Esophagus muscularis mucosa (tissue), 4 donors: ENCODE measurements at regions of chr20 and their contacts with region 1.

Region 1: GRCh38 chr20:41078329-41078728 is 49.7 kb downstream of the TOP1 start:
- DNase-seq: no peak
- H3K4me3 ChIP-seq: no peak overlapping the region
- H3K27ac ChIP-seq: peak overlapping the region in 1 of 4 donors; percentile 13
- H3K4me1 ChIP-seq: peaks cover 16 to 74% (median 46%) of the 10 kb centered on the region in 4 donors
- H3K27me3 ChIP-seq: no peaks in the 10 kb centered on the region
- CTCF ChIP-seq: peak; percentile 44 to 58 (median 51)
- EP300 ChIP-seq: no peak
- POLR2A ChIP-seq: no peak

Region 2: GRCh38 chr20:40962730-40963504 is 115.4 kb before region 1 on chr20:
- intact Hi-C with region 1: no loop called
- DNase-seq: peak; percentile 93
- H3K4me3 ChIP-seq: no peak overlapping the region
- H3K27ac ChIP-seq: no peak overlapping the region
- H3K4me1 ChIP-seq: peaks cover 0 to 5% (median 2%) of the 10 kb centered on the region in 4 donors
- H3K27me3 ChIP-seq: no peaks in the 10 kb centered on the region
- CTCF ChIP-seq: peak; percentile 82 to 91 (median 91)
- EP300 ChIP-seq: no peak
- POLR2A ChIP-seq: no peak

Region 3: GRCh38 chr20:40990542-40991120 is 87.7 kb before region 1 on chr20:
- intact Hi-C with region 1: loop called (anchors 5 kb)
- DNase-seq: peak; percentile 93
- H3K4me3 ChIP-seq: no peak overlapping the region
- H3K27ac ChIP-seq: no peak overlapping the region
- H3K4me1 ChIP-seq: peaks cover 4 to 11% (median 7%) of the 10 kb centered on the region in 4 donors
- H3K27me3 ChIP-seq: no peaks in the 10 kb centered on the region
- CTCF ChIP-seq: peak; percentile 75 to 86 (median 85)
- EP300 ChIP-seq: no peak
- POLR2A ChIP-seq: no peak

Region 4: DNA sequence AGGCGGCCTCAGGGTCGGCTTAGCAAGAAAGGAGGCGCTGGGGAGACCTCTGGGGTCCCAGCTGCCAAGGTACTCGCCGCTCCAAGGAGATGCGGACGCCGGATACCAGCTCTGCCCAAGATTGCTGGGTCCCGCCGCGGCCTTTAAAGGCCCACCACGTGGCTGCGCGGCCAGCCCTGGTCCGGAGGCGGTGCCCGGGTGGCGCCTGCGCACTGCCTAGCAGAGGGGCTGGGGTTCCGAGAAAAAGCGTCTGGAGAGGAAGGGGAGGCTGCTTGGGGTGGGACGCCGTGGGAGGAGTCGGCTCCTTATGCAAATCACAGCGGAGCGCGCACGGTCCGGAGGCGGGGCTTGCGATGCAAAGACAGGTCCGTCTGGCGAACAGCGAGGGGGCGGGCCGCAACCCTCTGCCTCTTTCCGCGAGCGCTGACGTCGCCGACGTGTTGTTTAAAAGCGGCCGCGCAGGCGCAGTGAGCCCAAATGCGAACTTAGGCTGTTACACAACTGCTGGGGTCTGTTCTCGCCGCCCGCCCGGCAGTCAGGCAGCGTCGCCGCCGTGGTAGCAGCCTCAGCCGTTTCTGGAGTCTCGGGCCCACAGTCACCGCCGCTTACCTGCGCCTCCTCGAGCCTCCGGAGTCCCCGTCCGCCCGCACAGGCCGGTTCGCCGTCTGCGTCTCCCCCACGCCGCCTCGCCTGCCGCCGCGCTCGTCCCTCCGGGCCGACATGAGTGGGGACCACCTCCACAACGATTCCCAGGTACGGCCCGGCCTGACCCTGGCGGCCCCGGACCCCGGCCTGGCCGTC is 49.8 kb before region 1 on chr20 and contains the start of gene TOP1:
- intact Hi-C with region 1: loop called (anchors 5 kb)
- DNase-seq: peak; percentile 100
- H3K4me3 ChIP-seq: peak within 1 kb of the TSS; percentile 93 to 99 (median 98)
- H3K27ac ChIP-seq: peak within 1 kb of the TSS; percentile 93 to 100 (median 98)
- H3K4me1 ChIP-seq: peaks cover 32 to 46% (median 42%) of the 10 kb centered on the region in 4 donors
- H3K27me3 ChIP-seq: no peaks in the 10 kb centered on the region
- CTCF ChIP-seq: peak in 1 of 3 experiments; percentile 27
- EP300 ChIP-seq: no peak
- POLR2A ChIP-seq: peak; percentile 95
- total RNA-seq, gene TOP1: 20.2 to 28.5 (median 23.0) TPM